Psoas muscle (tissue), 8 donors: ENCODE measurements at regions of chr6 and their contacts with region 1.

Region 1: DNA sequence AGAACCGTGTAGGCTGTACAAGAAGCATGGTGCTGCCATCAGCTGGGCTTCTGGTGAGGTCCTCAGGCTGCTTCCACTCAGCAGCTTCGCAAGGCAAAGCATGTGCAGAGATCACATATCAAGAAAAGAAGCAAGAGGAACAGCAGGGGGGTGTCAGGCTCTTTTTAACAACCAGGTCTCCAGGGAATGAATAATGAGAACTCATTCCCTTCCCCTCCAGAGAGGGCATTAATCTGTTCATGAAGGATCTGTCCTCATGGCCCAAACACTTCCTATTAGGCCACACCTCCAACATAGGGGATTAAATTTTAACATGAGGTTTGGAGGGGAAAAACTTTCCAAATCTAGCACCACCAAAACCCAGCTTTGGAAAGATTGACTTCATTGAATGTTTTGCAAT is 20.0 kb downstream of the GINM1 start:
- DNase-seq: no peak
- ATAC-seq: no peak
- H3K4me3 ChIP-seq: no peak overlapping the region
- H3K27ac ChIP-seq: no peak overlapping the region
- H3K4me1 ChIP-seq: no peaks in the 10 kb centered on the region
- H3K27me3 ChIP-seq: no peaks in the 10 kb centered on the region
- CTCF ChIP-seq: no peak

Region 2: GRCh38 chr6:149729824-149730223 is 143.7 kb after region 1 on chr6:
- intact Hi-C with region 1: loop called in 1 of 2 experiments (anchors 10 kb)
- DNase-seq: no peak
- ATAC-seq: no peak
- H3K4me3 ChIP-seq: no peak overlapping the region
- H3K27ac ChIP-seq: no peak overlapping the region
- H3K4me1 ChIP-seq: no peaks in the 10 kb centered on the region
- H3K27me3 ChIP-seq: no peaks in the 10 kb centered on the region
- CTCF ChIP-seq: no peak